Dorsolateral prefrontal cortex (tissue), 120 donors: ENCODE measurements at regions of chr17 and their contacts with region 1.

Region 1: DNA sequence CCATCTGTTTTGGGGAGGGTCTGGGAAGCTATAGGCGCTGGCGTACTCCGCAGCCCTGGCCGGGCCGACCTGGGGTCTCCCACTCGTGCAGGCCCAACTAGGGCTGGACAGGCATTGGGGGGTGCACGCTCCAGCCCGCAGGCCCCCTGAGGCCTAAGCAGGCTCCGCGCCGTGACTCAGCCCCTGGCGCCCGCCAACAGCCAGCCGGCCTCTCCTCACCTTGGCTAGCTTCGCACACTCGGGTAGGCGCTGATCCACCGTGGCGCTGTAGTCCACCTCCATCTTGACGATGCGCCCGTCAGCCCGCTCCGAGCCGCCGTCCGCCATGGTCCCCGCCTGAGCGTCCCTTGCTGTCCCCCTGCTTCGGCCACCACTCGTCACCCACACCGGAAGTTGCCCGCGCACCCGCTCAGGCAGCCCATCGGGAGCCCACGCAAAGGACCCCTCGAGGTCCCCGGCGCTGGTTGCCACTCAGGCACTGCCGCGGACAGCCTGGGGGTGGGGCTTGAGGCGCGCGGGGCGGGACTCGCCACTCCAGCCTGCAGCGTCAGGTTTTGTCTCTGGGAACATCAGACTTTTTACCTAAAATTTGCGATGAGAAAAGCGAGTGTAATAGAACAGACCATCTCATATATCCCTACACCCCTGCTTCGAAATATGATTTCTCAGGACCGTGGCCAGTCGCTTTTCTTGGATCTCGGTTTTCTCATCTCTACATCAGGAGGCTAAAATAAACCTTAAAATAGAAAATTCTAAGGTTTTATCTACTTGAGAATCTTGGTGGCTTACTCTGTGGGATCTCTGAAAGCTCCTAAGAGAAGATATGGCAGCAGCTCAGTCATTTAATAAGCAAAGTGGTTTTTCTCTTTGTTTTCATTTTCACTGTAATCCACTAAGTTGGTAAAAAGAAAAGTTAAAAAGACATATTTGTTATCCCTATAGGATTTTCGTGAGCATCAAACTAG is at the start of gene PSMD12:
- DNase-seq: peak; percentile 88 to 96 (median 94)
- H3K4me3 ChIP-seq: peak within 1 kb of the TSS; percentile 62 to 100 (median 92)
- H3K27ac ChIP-seq: peak within 1 kb of the TSS; percentile 60 to 96 (median 88)
- H3K27me3 ChIP-seq: no peaks in the 10 kb centered on the region
- CTCF ChIP-seq: peak in 49 of 56 donors; percentile 10 to 67 (median 39)
- total RNA-seq, gene PSMD12: 32.9 to 84.7 (median 64.1) TPM

Region 2: DNA sequence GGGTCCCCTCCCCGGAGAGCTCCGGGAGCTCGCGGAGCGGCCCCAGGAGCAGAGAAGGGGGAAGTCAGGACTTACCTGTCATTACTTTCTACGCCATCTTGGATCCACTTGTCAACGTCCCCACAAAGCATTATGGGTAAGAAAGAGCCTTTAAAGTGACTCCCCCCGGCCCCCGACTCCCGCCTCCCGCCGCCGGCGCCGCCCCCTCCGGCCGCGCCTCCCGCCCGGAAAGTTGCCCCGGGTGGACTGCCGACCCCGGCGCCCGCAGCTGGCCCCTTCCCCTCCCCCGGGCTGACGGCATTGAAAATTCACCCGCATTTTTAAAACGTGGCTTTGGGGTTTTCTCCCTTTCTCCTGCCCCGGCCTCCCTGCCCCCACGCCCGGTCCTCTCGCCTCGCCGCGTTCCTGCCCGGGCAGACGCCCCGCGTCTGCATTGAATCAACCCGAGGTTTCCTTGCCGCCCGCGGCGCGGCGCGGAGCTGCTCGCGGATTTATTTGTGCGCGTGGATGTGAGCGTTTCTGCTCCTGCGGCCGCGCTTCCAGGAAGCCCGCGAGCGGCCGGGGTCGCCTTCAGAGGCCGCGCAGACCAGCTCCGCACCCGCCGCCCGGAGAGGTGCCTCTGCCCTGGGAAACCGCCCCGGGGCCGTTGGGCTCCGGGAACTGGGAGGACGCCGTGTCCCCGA is 121.3 kb before region 1 on chr17 and contains the start of gene HELZ:
- intact Hi-C with region 1: loop called (anchors 10 kb)
- DNase-seq: peak in 9 of 10 donors; percentile 36 to 77 (median 62)
- H3K4me3 ChIP-seq: peak within 1 kb of the TSS; percentile 63 to 100 (median 96)
- H3K27ac ChIP-seq: peak within 1 kb of the TSS in 54 of 59 donors; percentile 36 to 93 (median 78)
- H3K27me3 ChIP-seq: no peaks in the 10 kb centered on the region
- CTCF ChIP-seq: peak in 9 of 56 donors; percentile 5 to 38 (median 18)
- total RNA-seq, gene HELZ: 48.6 to 93.2 (median 71.0) TPM

Region 3: GRCh38 chr17:67272312-67273050 is 94.0 kb before region 1 on chr17:
- intact Hi-C with region 1: no loop called
- DNase-seq: no peak
- H3K4me3 ChIP-seq: no peak overlapping the region
- H3K27ac ChIP-seq: no peak overlapping the region
- H3K27me3 ChIP-seq: no peaks in the 10 kb centered on the region
- CTCF ChIP-seq: no peak

Region 4: DNA sequence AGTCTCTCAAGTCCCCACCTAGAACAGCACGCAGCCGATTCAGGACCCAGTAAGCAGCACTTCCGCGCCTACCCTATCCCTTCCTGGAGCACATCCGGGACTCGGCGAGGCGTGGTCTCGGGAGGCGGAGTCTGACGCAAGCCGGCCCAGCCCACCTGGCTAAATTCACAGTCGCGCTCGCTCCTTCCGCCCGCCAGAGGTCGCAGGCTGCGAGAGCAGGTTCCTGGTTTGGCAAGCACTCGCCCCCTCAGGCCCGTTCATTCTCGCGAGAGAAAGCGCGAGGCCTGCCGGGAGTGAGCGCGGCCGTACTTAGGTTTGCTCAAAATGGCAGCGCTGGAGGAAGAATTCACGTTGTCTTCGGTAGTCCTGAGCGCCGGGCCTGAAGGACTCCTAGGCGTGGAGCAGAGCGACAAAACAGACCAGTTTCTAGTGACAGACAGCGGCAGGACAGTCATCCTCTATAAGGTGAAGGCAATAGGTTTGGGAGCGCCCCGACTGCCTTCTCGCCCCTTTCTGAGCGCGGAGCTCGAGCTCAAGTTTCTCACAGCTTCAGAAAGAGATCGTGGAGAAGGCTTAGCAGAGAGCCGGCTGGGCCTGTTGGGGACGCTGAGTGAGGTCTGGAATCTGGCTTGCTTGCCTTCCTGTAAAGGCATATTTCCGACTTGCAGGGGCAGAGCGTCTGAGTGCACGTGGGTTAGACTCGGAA is 351.3 kb after region 1 on chr17 and contains the start of gene NOL11:
- intact Hi-C with region 1: loop called (anchors 5 to 10 kb)
- DNase-seq: peak; percentile 99 to 100 (median 100)
- H3K4me3 ChIP-seq: peak within 1 kb of the TSS; percentile 61 to 100 (median 87)
- H3K27ac ChIP-seq: peak within 1 kb of the TSS; percentile 45 to 96 (median 87)
- H3K27me3 ChIP-seq: no peaks in the 10 kb centered on the region
- CTCF ChIP-seq: peak; percentile 78 to 99 (median 95)
- total RNA-seq, gene NOL11: 16.2 to 36.1 (median 25.5) TPM